ENCODE measurements at regions of chr7 and their contacts with region 1.

Region 1: GRCh38 chr7:131071786-131072504 is 255.7 kb upstream of the MKLN1 start:
- DNase-seq: no peak
- ATAC-seq: peak; percentile 62
- H3K4me3 ChIP-seq: peak overlapping the region; percentile 16 to 21
- H3K27ac ChIP-seq: peak overlapping the region; percentile 65
- H3K4me1 ChIP-seq: peaks cover 13% of the 10 kb centered on the region
- H3K27me3 ChIP-seq: no peaks in the 10 kb centered on the region
- CTCF ChIP-seq: peak; percentile 69

Region 2: GRCh38 chr7:130648580-130648979 is 423.4 kb before region 1 on chr7:
- CTCF ChIA-PET with region 1: no interaction called
- POLR2A ChIA-PET with region 1: no interaction called
- in situ Hi-C with region 1: no loop called
- intact Hi-C with region 1: no loop called
- DNase-seq: no peak
- ATAC-seq: no peak
- H3K4me3 ChIP-seq: no peak overlapping the region
- H3K27ac ChIP-seq: no peak overlapping the region
- H3K4me1 ChIP-seq: no peaks in the 10 kb centered on the region
- H3K27me3 ChIP-seq: no peaks in the 10 kb centered on the region
- CTCF ChIP-seq: no peak

Region 3: GRCh38 chr7:131032786-131033185 is 39.2 kb before region 1 on chr7:
- CTCF ChIA-PET with region 1: no interaction called
- POLR2A ChIA-PET with region 1: interaction called, 11 read pairs
- in situ Hi-C with region 1: no loop called
- intact Hi-C with region 1: no loop called
- DNase-seq: no peak
- ATAC-seq: no peak
- H3K4me3 ChIP-seq: no peak overlapping the region
- H3K27ac ChIP-seq: no peak overlapping the region
- H3K4me1 ChIP-seq: no peaks in the 10 kb centered on the region
- H3K27me3 ChIP-seq: no peaks in the 10 kb centered on the region
- CTCF ChIP-seq: no peak

Region 4: GRCh38 chr7:131057015-131057793 is 14.7 kb before region 1 on chr7:
- CTCF ChIA-PET with region 1: no interaction called
- POLR2A ChIA-PET with region 1: no interaction called
- in situ Hi-C with region 1: no loop called
- intact Hi-C with region 1: no loop called
- DNase-seq: no peak
- ATAC-seq: no peak
- H3K4me3 ChIP-seq: no peak overlapping the region
- H3K27ac ChIP-seq: no peak overlapping the region
- H3K4me1 ChIP-seq: no peaks in the 10 kb centered on the region
- H3K27me3 ChIP-seq: no peaks in the 10 kb centered on the region
- CTCF ChIP-seq: no peak

Region 5: DNA sequence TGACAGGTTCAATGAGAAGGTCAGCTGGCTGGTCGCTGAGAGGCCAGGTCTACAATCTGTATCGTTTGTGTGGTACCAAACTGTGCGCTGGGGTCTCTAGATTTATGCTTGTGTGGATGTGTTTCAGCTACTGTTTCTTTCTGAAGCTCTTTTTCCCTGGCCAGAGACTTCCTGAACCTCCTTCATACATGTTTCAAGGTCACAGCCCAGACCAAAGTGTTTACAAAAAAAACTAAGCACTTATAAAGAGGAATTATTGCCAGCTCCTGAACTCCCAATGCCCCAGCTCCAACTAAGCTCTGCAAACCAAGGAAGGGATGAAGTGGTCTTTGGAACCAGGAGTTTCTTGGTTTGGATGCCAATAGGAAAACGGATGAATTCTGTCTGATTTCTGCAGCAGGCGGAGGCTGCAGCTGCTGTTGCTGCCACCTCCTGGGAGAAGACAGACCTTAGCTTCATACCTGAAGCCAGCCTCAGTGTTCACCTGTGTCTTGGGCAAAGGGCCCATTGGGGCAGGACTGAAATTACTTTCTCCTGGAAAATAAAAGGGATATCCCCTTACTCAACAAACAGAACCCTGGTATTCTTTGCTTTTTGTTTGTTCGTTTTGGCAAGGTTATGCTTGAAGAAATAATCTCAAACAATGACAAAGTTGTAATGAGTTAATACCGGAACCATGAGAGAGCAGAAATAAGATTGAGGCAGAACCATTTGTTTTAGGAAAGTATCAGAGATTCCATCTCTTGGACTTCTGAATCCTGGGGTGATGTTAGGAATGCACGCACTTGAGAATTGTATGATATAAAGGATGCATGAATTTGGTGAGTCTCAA is 231.1 kb after region 1 on chr7:
- CTCF ChIA-PET with region 1: interaction called, 9 read pairs
- POLR2A ChIA-PET with region 1: no interaction called
- in situ Hi-C with region 1: no loop called
- intact Hi-C with region 1: loop called (anchors 5 kb)
- DNase-seq: no peak
- ATAC-seq: peak; percentile 83
- H3K4me3 ChIP-seq: no peak overlapping the region
- H3K27ac ChIP-seq: no peak overlapping the region
- H3K4me1 ChIP-seq: peaks cover 5% of the 10 kb centered on the region; the same call in 1 of the 2 replicates
- H3K27me3 ChIP-seq: no peaks in the 10 kb centered on the region
- CTCF ChIP-seq: peak; percentile 81

Region 6: GRCh38 chr7:131424219-131424822 is 352.4 kb after region 1 on chr7:
- CTCF ChIA-PET with region 1: no interaction called
- POLR2A ChIA-PET with region 1: no interaction called
- in situ Hi-C with region 1: no loop called
- intact Hi-C with region 1: loop called (anchors 2 kb)
- DNase-seq: peak; percentile 30
- ATAC-seq: peak; percentile 90
- H3K4me3 ChIP-seq: no peak overlapping the region
- H3K27ac ChIP-seq: no peak overlapping the region
- H3K4me1 ChIP-seq: no peaks in the 10 kb centered on the region
- H3K27me3 ChIP-seq: no peaks in the 10 kb centered on the region
- CTCF ChIP-seq: peak; percentile 71; the same call in 1 of the 2 replicates

Region 7: DNA sequence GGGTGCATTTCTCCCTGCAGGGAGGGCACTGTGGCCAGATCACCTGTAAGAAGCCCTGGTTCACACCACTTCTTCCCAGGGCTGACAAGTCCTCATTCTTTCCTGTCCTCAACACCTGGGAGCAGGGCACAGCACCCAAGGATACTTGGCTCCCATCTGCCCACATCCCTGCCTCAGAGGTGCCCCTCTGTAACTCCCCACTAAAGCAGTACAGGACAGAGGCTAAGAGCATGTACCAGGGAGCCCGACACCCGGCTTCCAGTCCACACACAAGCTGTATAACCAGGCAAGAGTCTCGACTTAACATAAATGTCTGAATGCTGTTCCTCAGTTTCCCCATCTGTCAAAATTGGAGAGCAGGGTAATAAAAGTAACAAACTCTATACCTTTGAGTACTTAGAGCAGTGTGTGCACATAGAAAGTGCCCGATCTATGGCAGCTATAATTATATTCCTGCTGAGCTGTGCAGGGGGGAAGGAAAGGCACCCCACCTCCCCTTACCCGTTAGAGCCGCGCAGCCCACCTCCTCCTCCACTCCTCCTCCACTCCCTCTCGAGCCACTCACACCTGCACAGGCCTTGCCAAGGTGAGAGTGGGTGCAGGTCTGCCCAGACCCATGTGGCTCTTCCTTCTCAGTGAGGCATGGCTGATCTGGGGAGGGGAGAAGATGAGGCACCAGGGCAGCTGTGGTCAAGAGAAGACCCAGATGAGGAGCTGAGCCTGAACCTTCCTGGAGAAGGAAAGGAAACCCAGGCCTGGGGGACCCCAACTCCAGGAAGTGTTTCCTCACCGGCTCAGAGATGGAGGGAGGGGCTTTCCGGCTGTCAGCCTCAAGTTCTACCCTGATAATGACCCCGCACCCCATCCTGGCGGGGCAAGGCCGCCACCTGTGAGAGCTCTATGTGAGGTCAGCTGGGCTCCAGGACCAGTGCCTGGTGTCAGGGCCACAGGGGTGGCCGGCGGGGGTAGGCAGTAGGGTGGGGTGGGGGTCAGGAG is 461.9 kb after region 1 on chr7:
- CTCF ChIA-PET with region 1: interaction called, 16 read pairs
- POLR2A ChIA-PET with region 1: no interaction called
- in situ Hi-C with region 1: no loop called
- intact Hi-C with region 1: no loop called
- DNase-seq: no peak
- ATAC-seq: no peak
- H3K4me3 ChIP-seq: no peak overlapping the region
- H3K27ac ChIP-seq: no peak overlapping the region
- H3K4me1 ChIP-seq: peaks cover 9% of the 10 kb centered on the region
- H3K27me3 ChIP-seq: no peaks in the 10 kb centered on the region
- CTCF ChIP-seq: no peak

Measured in Panc1 (cell line).